ENCODE measurements at regions of chr4 and their contacts with region 1.

Region 1: DNA sequence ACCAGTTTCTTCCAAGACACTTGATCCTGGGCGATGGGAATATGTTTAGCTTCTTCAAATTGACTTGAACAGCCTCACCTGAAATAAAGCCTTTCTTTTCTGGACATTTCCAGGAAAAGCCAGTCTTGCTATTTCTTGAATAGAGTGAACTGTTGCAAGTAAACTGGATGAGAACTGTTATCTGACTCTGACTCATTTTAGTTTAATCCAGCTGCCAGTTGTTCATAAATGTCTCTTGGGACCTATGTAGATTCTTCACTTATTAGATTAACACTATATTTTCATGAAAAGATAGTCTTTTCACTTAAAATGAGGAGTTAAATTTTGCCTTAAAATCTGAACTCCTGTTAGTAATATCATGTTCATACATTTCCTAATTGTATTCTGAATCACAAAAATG is 615.4 kb upstream of the GALNT7 start:
- DNase-seq: no peak
- ATAC-seq: no peak
- H3K4me3 Mint-ChIP-seq: no peak overlapping the region
- H3K27ac Mint-ChIP-seq: no peak overlapping the region
- H3K4me1 Mint-ChIP-seq: peaks cover 41% of the 10 kb centered on the region
- H3K27me3 Mint-ChIP-seq: peaks cover 3% of the 10 kb centered on the region; the same call in 1 of the 2 replicates
- CTCF ChIP-seq: no peak

Region 2: DNA sequence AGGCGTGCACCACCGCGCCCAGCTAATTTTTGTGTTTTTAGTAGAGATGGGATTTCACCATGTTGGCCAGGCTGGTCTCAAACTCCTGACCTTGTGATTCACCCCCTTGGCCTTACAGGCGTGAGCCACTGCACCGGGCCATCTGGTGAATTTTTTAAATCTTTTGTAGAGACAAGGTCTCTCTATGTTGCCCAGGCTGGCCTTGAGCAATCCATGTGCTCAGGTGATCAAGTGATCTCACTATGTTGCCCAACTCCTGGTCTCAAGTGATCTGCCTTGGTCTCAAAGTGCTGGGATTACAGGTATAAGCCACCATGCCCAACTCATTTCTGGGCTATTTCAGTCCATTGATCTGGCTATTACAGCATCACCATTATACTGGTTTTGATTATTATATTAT is 593.2 kb after region 1 on chr4:
- CTCF ChIA-PET with region 1: no interaction called
- POLR2A ChIA-PET with region 1: interaction called, 14 read pairs
- DNase-seq: no peak
- ATAC-seq: no peak
- H3K4me3 Mint-ChIP-seq: no peak overlapping the region
- H3K27ac Mint-ChIP-seq: no peak overlapping the region
- H3K4me1 Mint-ChIP-seq: peaks cover 6% of the 10 kb centered on the region
- H3K27me3 Mint-ChIP-seq: no peaks in the 10 kb centered on the region
- CTCF ChIP-seq: no peak